ENCODE measurements at regions of chr2 and their contacts with region 1.

Region 1: DNA sequence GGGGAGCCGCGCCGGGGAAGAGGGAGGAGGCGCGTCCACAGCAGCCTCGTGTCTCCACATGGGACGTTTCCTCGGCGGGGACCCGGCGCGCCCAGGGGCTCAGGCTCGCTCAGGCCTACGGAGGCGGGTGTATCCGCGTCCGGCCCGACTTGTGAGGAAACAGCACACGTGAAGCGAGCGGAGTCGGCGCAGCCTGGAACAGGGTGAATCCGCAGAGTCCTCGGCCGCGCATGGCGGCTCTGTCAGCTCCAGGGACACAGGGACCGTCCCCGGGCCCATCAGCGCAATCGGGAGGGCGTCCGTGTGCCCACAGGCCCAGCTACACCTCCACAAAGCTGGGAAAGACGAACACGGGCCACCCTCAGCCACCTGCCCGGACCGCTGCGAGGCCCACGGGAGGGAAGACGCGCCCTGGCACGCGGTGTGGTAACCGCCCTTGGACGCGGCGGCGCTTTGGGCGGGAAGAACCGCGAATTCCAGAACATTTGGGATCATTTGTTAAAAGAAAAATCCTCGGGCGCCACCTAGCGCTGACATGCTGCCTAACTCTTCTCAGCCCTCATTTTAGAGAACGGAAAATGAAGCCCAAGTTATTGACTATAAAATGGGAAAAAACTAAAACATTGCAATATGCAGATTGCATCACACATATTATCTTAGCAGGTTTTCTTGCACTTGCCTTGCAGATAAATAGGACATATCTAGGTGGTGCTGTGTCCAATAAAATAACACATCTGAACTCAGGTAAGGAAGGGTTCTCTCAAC is 40.4 kb downstream of the TMEM18 start:
- DNase-seq: peak; percentile 92

Region 2: DNA sequence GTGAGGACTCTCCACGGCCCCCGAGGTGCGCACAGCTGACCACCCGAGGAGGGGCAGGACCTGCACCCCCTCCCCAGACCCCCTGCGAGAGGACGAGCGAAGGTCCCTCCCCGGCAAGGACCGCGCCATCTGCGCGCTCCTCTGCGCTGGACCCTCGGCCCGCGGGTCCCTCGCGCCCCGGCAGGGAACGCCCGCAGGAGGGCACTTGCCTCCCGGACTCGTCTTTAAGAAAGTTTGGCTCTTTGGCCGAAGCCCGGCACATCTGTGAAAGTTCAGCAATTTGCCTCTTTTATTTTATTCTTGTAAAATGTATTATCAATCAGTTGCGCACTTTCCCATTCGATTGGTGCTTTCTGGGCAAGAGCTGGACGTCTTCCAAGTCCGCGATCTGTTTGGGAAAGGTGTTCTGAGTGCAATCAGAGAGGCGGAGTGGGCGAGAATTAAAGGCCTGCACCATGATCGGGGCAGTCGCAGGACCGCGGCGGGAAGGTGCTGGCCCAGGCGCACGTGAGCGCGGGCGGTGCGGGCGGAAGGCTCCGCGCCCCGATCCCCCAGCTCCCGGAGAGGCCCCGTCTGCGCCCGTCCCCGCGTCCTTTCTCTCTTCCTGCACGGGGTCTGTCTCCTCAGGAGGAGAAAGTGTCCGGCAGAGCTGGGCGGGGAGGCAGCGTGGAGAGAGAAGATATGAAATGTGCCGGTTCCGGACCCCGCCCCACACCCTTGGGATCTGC is 347.3 kb before region 1 on chr2:
- intact Hi-C with region 1: loop called in 1 of 2 experiments (anchors 2 kb)
- DNase-seq: peak; percentile 84

Region 3: GRCh38 chr2:437762-438393 is 198.9 kb before region 1 on chr2:
- intact Hi-C with region 1: loop called in 1 of 2 experiments (anchors 2 kb)
- DNase-seq: no peak

Region 4: DNA sequence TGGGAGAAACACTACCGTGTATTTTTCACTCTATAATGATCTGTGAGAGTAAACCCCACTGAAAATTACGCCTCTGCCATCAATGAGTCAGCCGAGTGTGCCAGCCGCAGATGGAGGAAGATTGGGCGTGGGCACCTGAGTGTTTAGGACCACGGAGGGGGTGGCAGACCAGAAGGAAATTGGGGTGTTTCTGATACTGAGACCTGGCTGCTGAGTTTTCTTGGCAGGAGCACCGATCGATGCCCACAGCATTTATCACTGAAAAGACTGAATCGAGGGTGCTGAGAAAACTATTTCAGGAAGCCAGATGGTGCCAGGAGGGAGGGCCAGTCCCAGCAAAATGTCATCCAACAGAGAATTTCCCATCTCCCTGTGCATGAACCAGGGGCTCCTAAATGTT is 684.5 kb after region 1 on chr2:
- intact Hi-C with region 1: loop called in 1 of 2 experiments (anchors 10 kb)
- DNase-seq: no peak